Heart left ventricle (tissue), 16 donors: ENCODE measurements at regions of chr7 and their contacts with region 1.

Region 1: GRCh38 chr7:16062269-16062668 is 359.1 kb downstream of the CRPPA start:
- DNase-seq: no peak
- ATAC-seq: peak; percentile 60 to 88 (median 71)
- H3K4me3 ChIP-seq: peak overlapping the region in 1 of 12 donors; percentile 14
- H3K27ac ChIP-seq: peak overlapping the region; percentile 53 to 93 (median 78)
- H3K4me1 ChIP-seq: peaks cover 3 to 67% (median 40%) of the 10 kb centered on the region in 12 donors
- H3K27me3 ChIP-seq: no peaks in the 10 kb centered on the region
- CTCF ChIP-seq: no peak
- POLR2A ChIP-seq: no peak

Region 2: GRCh38 chr7:15561835-15562234 is 500.4 kb before region 1 on chr7 and contains the start of gene AGMO:
- intact Hi-C with region 1: loop called in 7 of 10 experiments (anchors 5 to 10 kb)
- DNase-seq: peak; percentile 69 to 79 (median 75)
- ATAC-seq: peak; percentile 61 to 87 (median 84)
- H3K4me3 ChIP-seq: peak within 1 kb of the TSS in 10 of 12 donors; percentile 3 to 51 (median 40)
- H3K27ac ChIP-seq: peak within 1 kb of the TSS; percentile 51 to 80 (median 70)
- H3K4me1 ChIP-seq: peaks cover 0 to 35% (median 1%) of the 10 kb centered on the region in 12 donors
- H3K27me3 ChIP-seq: no peaks in the 10 kb centered on the region
- CTCF ChIP-seq: peak in 6 of 12 donors; percentile 7 to 39 (median 16)
- POLR2A ChIP-seq: no peak
- total RNA-seq, gene AGMO: 0.21 to 0.66 (median 0.40) TPM in 8 of 9 donors, not detected in the other

Region 3: GRCh38 chr7:15669443-15670090 is 392.7 kb before region 1 on chr7:
- intact Hi-C with region 1: no loop called
- DNase-seq: no peak
- ATAC-seq: no peak
- H3K4me3 ChIP-seq: no peak overlapping the region
- H3K27ac ChIP-seq: no peak overlapping the region
- H3K4me1 ChIP-seq: peaks cover 0 to 37% (median 4%) of the 10 kb centered on the region in 12 donors
- H3K27me3 ChIP-seq: no peaks in the 10 kb centered on the region
- CTCF ChIP-seq: no peak
- POLR2A ChIP-seq: no peak

Region 4: GRCh38 chr7:15720849-15721471 is 341.3 kb before region 1 on chr7:
- intact Hi-C with region 1: loop called in 3 of 10 experiments (anchors 5 to 10 kb)
- DNase-seq: peak in 3 of 5 donors; percentile 24 to 33 (median 26)
- ATAC-seq: no peak
- H3K4me3 ChIP-seq: no peak overlapping the region
- H3K27ac ChIP-seq: peak overlapping the region in 1 of 12 donors; percentile 17
- H3K4me1 ChIP-seq: peaks cover 0 to 16% (median 6%) of the 10 kb centered on the region in 12 donors
- H3K27me3 ChIP-seq: no peaks in the 10 kb centered on the region
- CTCF ChIP-seq: peak; percentile 52 to 86 (median 74)
- POLR2A ChIP-seq: no peak

Region 5: DNA sequence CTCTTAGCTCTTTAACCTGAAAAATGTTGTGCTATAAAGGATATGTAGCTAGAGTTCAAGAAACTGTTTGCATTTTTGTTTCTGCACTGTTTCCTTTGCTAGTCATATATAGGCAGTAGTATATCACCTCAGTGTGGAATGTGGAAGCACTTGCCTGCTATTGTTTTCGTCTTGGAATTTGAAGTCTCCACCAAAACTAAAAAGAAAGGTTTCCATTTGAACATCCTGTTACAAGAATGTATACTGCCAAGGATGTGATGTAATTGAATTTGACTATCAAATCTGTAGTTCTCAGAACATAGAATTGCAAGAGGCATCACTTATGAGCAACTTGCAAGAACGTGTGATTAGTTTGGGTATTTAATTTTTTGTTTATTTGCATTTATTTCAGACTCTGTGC is 324.7 kb before region 1 on chr7:
- intact Hi-C with region 1: loop called in 1 of 10 experiments (anchors 10 kb)
- DNase-seq: no peak
- ATAC-seq: no peak
- H3K4me3 ChIP-seq: no peak overlapping the region
- H3K27ac ChIP-seq: peak overlapping the region in 3 of 12 donors; percentile 13 to 36 (median 16)
- H3K4me1 ChIP-seq: no peaks in the 10 kb centered on the region
- H3K27me3 ChIP-seq: no peaks in the 10 kb centered on the region
- CTCF ChIP-seq: no peak
- POLR2A ChIP-seq: no peak

Region 6: GRCh38 chr7:15764851-15765382 is 297.4 kb before region 1 on chr7:
- intact Hi-C with region 1: loop called in 2 of 10 experiments (anchors 5 to 10 kb)
- DNase-seq: peak in 3 of 5 donors; percentile 36 to 64 (median 60)
- ATAC-seq: peak; percentile 51 to 85 (median 67)
- H3K4me3 ChIP-seq: no peak overlapping the region
- H3K27ac ChIP-seq: peak overlapping the region in 11 of 12 donors; percentile 6 to 82 (median 55)
- H3K4me1 ChIP-seq: peaks cover 0 to 22% (median 4%) of the 10 kb centered on the region in 12 donors
- H3K27me3 ChIP-seq: no peaks in the 10 kb centered on the region
- CTCF ChIP-seq: no peak
- POLR2A ChIP-seq: no peak

Region 7: GRCh38 chr7:15839416-15840100 is 222.7 kb before region 1 on chr7:
- intact Hi-C with region 1: loop called in 8 of 10 experiments (anchors 5 to 10 kb)
- DNase-seq: peak; percentile 69 to 84 (median 81)
- ATAC-seq: peak; percentile 94 to 98 (median 96)
- H3K4me3 ChIP-seq: peak overlapping the region in 11 of 12 donors; percentile 4 to 54 (median 42)
- H3K27ac ChIP-seq: peak overlapping the region; percentile 18 to 89 (median 79)
- H3K4me1 ChIP-seq: peaks cover 0 to 37% (median 17%) of the 10 kb centered on the region in 12 donors
- H3K27me3 ChIP-seq: no peaks in the 10 kb centered on the region
- CTCF ChIP-seq: no peak
- POLR2A ChIP-seq: no peak

Region 8: DNA sequence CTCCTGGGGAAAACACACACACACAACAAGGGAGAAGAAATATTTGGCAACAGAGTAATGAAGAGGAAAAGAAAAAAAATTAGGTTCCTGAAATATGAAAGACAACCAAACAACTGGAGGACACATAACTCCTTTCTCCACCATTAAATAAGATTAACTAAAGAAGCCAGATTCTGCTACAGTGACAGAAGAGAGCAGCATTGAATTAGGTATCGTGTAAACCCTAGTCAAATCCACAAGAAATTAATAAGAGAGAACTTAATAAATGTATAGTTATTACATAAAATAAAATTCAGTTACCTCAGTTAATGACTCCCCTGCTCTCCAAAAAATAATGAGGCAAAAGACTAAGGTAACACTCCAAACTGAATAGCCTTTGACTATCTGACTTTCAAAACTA is 52.4 kb after region 1 on chr7:
- intact Hi-C with region 1: no loop called
- DNase-seq: no peak
- ATAC-seq: peak in 1 of 4 donors; percentile 46
- H3K4me3 ChIP-seq: no peak overlapping the region
- H3K27ac ChIP-seq: no peak overlapping the region
- H3K4me1 ChIP-seq: no peaks in the 10 kb centered on the region
- H3K27me3 ChIP-seq: no peaks in the 10 kb centered on the region
- CTCF ChIP-seq: peak; percentile 16 to 62 (median 46)
- POLR2A ChIP-seq: no peak

Region 9: GRCh38 chr7:16144341-16145046 is 82.2 kb after region 1 on chr7:
- intact Hi-C with region 1: no loop called
- DNase-seq: no peak
- ATAC-seq: no peak
- H3K4me3 ChIP-seq: no peak overlapping the region
- H3K27ac ChIP-seq: no peak overlapping the region
- H3K4me1 ChIP-seq: no peaks in the 10 kb centered on the region
- H3K27me3 ChIP-seq: no peaks in the 10 kb centered on the region
- CTCF ChIP-seq: no peak
- POLR2A ChIP-seq: no peak